ENCODE measurements at regions of chr15 and their contacts with region 1.

Region 1: GRCh38 chr15:49471733-49472132 is 48.7 kb downstream of the FGF7 start:
- DNase-seq: no peak
- H3K4me3 ChIP-seq: no peak overlapping the region
- H3K27ac ChIP-seq: no peak overlapping the region
- H3K4me1 ChIP-seq: no peaks in the 10 kb centered on the region
- H3K27me3 ChIP-seq: no peaks in the 10 kb centered on the region
- CTCF ChIP-seq: no peak

Region 2: DNA sequence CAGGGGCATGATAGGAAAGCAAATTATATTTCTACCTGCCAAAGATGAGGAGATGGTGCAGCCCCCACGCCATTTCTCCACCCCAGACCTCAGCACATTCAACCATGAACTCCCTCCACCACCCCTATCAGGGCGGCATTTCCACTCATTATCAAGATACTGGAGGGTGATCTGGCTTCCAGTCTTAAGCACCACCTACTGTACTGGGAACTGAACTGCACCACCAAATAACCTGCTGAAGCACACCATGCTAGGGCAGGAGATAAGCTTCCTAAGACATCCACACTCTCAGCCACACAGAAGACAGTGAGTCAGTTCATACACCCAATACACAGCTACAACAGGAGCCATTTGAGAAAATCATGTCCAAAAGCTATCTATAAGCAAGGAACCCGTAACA is 50.1 kb after region 1 on chr15:
- CTCF ChIA-PET with region 1: interaction called, 18 read pairs
- dilution Hi-C with region 1: no loop called
- in situ Hi-C with region 1: no loop called
- intact Hi-C with region 1: no loop called
- DNase-seq: peak; percentile 29
- H3K4me3 ChIP-seq: no peak overlapping the region
- H3K27ac ChIP-seq: no peak overlapping the region
- H3K4me1 ChIP-seq: no peaks in the 10 kb centered on the region
- H3K27me3 ChIP-seq: no peaks in the 10 kb centered on the region
- CTCF ChIP-seq: peak; percentile 26 to 51

Region 3: GRCh38 chr15:49620658-49621368 is 149.1 kb after region 1 on chr15 and contains the starts of genes DTWD1 and FAM227B:
- CTCF ChIA-PET with region 1: no interaction called
- dilution Hi-C with region 1: no loop called
- in situ Hi-C with region 1: no loop called
- intact Hi-C with region 1: loop called (anchors 1 kb)
- DNase-seq: peak; percentile 97
- H3K4me3 ChIP-seq: peak within 1 kb of the TSS; percentile 88 to 96 (median 92)
- H3K27ac ChIP-seq: peak within 1 kb of the TSS; percentile 87
- H3K4me1 ChIP-seq: peaks cover 27% of the 10 kb centered on the region
- H3K27me3 ChIP-seq: no peaks in the 10 kb centered on the region
- CTCF ChIP-seq: no peak
- total RNA-seq, gene DTWD1: 23.2 to 24.2 TPM
- total RNA-seq, gene FAM227B: 5.0 to 5.4 TPM

Region 4: GRCh38 chr15:49876401-49877038 is 404.8 kb after region 1 on chr15:
- CTCF ChIA-PET with region 1: no interaction called
- dilution Hi-C with region 1: no loop called
- in situ Hi-C with region 1: no loop called
- intact Hi-C with region 1: loop called (anchors 10 kb)
- DNase-seq: peak; percentile 38
- H3K4me3 ChIP-seq: no peak overlapping the region
- H3K27ac ChIP-seq: no peak overlapping the region
- H3K4me1 ChIP-seq: peaks cover 8% of the 10 kb centered on the region
- H3K27me3 ChIP-seq: no peaks in the 10 kb centered on the region
- CTCF ChIP-seq: peak; percentile 39 to 69

Region 5: GRCh38 chr15:49901996-49902684 is 430.4 kb after region 1 on chr15:
- CTCF ChIA-PET with region 1: no interaction called
- dilution Hi-C with region 1: no loop called
- in situ Hi-C with region 1: no loop called
- intact Hi-C with region 1: loop called (anchors 1 kb)
- DNase-seq: peak; percentile 5
- H3K4me3 ChIP-seq: no peak overlapping the region
- H3K27ac ChIP-seq: no peak overlapping the region
- H3K4me1 ChIP-seq: no peaks in the 10 kb centered on the region
- H3K27me3 ChIP-seq: no peaks in the 10 kb centered on the region
- CTCF ChIP-seq: peak; percentile 14 to 42

Region 6: GRCh38 chr15:50003786-50004334 is 532.1 kb after region 1 on chr15:
- CTCF ChIA-PET with region 1: no interaction called
- dilution Hi-C with region 1: no loop called
- in situ Hi-C with region 1: no loop called
- intact Hi-C with region 1: loop called (anchors 2 kb)
- DNase-seq: peak; percentile 70
- H3K4me3 ChIP-seq: no peak overlapping the region
- H3K27ac ChIP-seq: no peak overlapping the region
- H3K4me1 ChIP-seq: no peaks in the 10 kb centered on the region
- H3K27me3 ChIP-seq: no peaks in the 10 kb centered on the region
- CTCF ChIP-seq: peak; percentile 76 to 78

Region 7: GRCh38 chr15:50051803-50052419 is 580.2 kb after region 1 on chr15:
- CTCF ChIA-PET with region 1: interaction called, 3 read pairs
- dilution Hi-C with region 1: no loop called
- in situ Hi-C with region 1: no loop called
- intact Hi-C with region 1: loop called (anchors 5 kb)
- DNase-seq: peak; percentile 67
- H3K4me3 ChIP-seq: no peak overlapping the region
- H3K27ac ChIP-seq: no peak overlapping the region
- H3K4me1 ChIP-seq: no peaks in the 10 kb centered on the region
- H3K27me3 ChIP-seq: no peaks in the 10 kb centered on the region
- CTCF ChIP-seq: peak; percentile 63 to 77